Activated naive CD4-positive, alpha-beta T cell treated with anti-CD3 and anti-CD28 coated beads for 36 hours (primary cell): ENCODE measurements at regions of chr15 and their contacts with region 1.

Region 1: GRCh38 chr15:38354315-38354929 is 99.5 kb upstream of the FAM98B start:
- DNase-seq: peak; percentile 75
- H3K4me3 Mint-ChIP-seq: no peak overlapping the region
- H3K27ac Mint-ChIP-seq: no peak overlapping the region
- H3K4me1 Mint-ChIP-seq: no peaks in the 10 kb centered on the region
- H3K27me3 Mint-ChIP-seq: peaks cover 4% of the 10 kb centered on the region

Region 2: DNA sequence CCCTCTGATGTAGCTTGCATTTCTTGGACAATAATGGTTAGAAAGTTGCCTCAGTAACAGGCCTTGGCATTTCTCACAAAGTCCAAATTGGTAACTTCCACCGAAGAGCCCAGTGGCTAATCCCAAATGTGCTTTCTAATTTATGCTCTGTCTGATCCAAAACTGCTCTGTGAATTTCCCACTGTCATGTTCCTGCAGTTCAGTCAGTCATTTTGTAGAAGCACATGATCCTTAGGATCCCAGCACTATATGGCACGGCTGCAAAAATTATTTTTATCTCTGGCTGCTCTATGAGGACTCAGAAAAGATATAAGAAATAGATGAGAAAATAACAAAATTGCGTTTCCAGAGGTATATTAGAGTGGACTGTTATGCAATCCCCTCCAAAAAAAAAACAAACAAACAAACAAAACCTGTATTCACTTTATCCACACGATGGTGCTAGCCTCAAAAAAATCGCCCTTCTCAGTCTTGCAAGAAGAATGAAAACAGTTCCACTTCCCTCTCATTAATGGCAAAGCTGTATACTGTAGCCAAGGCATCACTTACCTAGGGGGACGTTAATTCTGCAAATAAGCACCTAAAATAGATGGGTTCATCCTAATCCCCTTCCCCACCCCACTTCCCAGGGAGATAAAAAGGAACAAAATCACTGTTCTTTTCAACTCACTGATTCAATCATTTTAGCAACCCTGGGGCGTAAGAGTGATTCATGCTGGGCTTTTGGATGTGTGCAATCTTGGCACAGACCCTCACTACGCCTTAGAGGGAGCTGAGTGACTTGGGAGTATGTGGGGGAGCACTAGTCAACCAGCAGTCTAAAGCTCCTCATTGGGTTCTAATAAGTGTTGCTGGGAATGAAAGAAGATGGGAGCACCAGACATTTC is 358.7 kb before region 1 on chr15:
- CTCF ChIA-PET with region 1: no interaction called
- intact Hi-C with region 1: loop called (anchors 1 kb)
- DNase-seq: peak; percentile 16
- H3K4me3 Mint-ChIP-seq: no peak overlapping the region
- H3K27ac Mint-ChIP-seq: no peak overlapping the region
- H3K4me1 Mint-ChIP-seq: no peaks in the 10 kb centered on the region
- H3K27me3 Mint-ChIP-seq: peaks cover 4% of the 10 kb centered on the region

Region 3: GRCh38 chr15:38187630-38188313 is 166.7 kb before region 1 on chr15:
- CTCF ChIA-PET with region 1: no interaction called
- intact Hi-C with region 1: loop called (anchors 10 kb)
- DNase-seq: no peak
- H3K4me3 Mint-ChIP-seq: no peak overlapping the region
- H3K27ac Mint-ChIP-seq: no peak overlapping the region
- H3K4me1 Mint-ChIP-seq: no peaks in the 10 kb centered on the region
- H3K27me3 Mint-ChIP-seq: peaks cover 8% of the 10 kb centered on the region